KBM-7 (cell line): ENCODE measurements at regions of chr2 and their contacts with region 1.

Region 1: GRCh38 chr2:192162392-192163042 is 32.2 kb downstream of the TMEFF2 start:
- DNase-seq: peak; percentile 65

Region 2: DNA sequence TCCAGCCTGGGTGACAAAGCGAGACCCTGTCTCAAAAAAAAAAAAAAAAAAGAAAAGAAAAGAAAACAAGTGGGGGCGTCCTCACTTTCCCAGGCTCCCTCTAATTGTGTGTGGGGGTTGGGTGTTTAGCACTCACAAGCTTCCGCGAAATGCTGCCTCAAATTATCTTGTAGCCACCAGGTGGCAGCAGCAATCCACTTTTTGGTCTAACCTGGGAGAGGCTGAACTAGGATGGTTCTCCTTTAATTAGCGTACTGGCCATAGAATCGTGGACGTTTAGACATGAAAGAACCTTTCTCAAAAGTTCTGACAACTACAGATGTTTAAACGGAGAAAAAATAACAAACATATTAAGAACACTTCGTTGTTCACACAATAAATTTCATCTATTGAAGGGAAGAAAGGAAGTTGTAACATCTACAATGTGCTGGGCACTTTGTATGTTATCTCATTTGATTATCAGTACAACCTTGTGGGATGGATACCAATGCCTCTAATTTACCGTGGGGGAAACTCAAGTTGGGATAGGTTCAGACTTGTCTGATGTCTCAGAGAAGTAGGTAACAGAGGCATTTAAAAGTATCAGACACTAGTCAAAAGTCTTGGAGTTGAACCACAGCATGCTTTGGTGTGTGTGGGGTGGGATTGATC is 607.3 kb before region 1 on chr2:
- in situ Hi-C with region 1: loop called (anchors 25 kb)
- DNase-seq: peak; percentile 81

Region 3: GRCh38 chr2:191811807-191812602 is 350.5 kb before region 1 on chr2:
- in situ Hi-C with region 1: loop called (anchors 25 kb)
- DNase-seq: peak; percentile 68